GM12878 (cell line): ENCODE measurements at regions of chr1 and their contacts with region 1.

Region 1: DNA sequence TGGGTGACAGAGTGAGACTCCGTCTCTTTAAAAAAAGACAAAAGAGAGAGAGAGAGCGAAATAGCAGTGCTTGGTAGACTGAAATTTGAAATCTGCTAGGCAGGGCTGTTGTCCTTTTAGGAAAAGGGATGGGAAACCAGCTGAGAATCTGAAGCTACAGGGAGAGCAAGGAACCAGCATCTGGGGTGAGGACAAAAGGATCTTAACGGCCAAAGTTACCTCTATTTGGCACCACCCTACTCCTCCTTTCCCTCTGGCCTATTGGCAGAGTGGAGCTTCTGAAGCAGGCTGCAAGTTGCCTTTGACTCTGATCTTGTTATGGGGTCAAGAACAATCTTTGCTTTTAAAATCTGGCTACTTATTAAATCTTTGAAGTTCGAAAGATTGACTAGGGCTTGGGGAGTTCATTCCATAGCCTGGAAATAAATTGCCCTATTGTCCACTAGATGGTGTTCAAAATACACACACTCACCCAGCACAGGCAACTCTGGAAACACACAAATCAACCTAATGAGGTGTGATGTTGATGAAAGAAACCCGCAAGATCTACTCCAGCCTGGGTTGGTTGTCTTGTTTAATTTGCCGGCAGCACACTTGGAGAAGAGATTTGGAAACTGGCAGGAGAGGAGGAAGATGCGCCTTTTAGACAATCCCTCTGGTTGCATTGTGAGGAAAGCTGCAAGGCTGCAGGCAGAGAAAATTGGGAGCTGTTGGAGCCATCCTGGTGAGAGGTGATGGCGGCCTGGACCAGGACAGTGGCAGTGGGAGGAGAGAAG is 16.5 kb upstream of the PARP1 start:
- DNase-seq: no peak
- ATAC-seq: peak; percentile 89
- H3K4me3 ChIP-seq: no peak overlapping the region
- H3K27ac ChIP-seq: no peak overlapping the region
- H3K4me1 ChIP-seq: peaks cover 16% of the 10 kb centered on the region
- H3K27me3 ChIP-seq: no peaks in the 10 kb centered on the region
- CTCF ChIP-seq: peak; percentile 47 to 69 (median 67); a peak in 5 of 6 replicates
- EP300 ChIP-seq: no peak
- POLR2A ChIP-seq: no peak
- RAD21 ChIP-seq: peak; percentile 83

Region 2: GRCh38 chr1:226407497-226408284 is 16.7 kb before region 1 on chr1 and contains the start of gene PARP1:
- CTCF ChIA-PET with region 1: interaction called, 24 read pairs
- POLR2A ChIA-PET with region 1: no interaction called
- RAD21 ChIA-PET with region 1: interaction called, 6 read pairs
- SMC1A ChIA-PET with region 1: interaction called, 5 read pairs
- in situ Hi-C with region 1: no loop called
- intact Hi-C with region 1: no loop called
- DNase-seq: no peak
- ATAC-seq: peak; percentile 85
- H3K4me3 ChIP-seq: peak within 1 kb of the TSS; percentile 86
- H3K27ac ChIP-seq: peak within 1 kb of the TSS; percentile 77
- H3K4me1 ChIP-seq: peaks cover 22% of the 10 kb centered on the region
- H3K27me3 ChIP-seq: no peaks in the 10 kb centered on the region
- CTCF ChIP-seq: peak; percentile 33 to 83 (median 71); a peak in 5 of 6 replicates
- EP300 ChIP-seq: no peak; a peak in 1 of 4 replicates
- POLR2A ChIP-seq: peak; percentile 86
- RAD21 ChIP-seq: no peak
- polyA plus RNA-seq, gene PARP1: 113 to 170 TPM

Region 3: DNA sequence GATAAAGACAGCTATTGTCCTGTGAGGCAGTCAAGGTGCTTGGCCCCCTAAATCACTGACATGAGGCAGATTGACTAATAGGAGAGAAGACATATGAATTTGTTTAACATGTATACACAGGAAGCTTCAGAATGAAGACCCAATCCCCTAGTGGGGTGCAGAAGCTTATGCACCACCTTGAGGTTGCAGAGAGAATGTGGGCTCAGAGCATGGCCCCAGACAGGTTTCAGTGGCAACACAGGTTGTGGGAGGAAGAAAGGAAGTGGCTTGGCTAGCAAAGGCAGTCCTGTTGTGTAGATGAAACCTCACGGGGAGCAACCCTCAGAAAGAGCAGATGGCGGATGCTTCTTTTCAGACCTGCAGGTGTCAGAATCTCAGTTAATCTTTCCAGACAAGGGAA is 20.5 kb after region 1 on chr1:
- CTCF ChIA-PET with region 1: interaction called, 16 read pairs
- POLR2A ChIA-PET with region 1: interaction called, 9 read pairs
- RAD21 ChIA-PET with region 1: interaction called, 17 read pairs
- SMC1A ChIA-PET with region 1: interaction called, 15 read pairs
- in situ Hi-C with region 1: no loop called
- intact Hi-C with region 1: loop called (anchors 1 kb)
- DNase-seq: peak; percentile 83
- ATAC-seq: peak; percentile 99
- H3K4me3 ChIP-seq: no peak overlapping the region
- H3K27ac ChIP-seq: no peak overlapping the region
- H3K4me1 ChIP-seq: peaks cover 17% of the 10 kb centered on the region
- H3K27me3 ChIP-seq: no peaks in the 10 kb centered on the region
- CTCF ChIP-seq: peak; percentile 32 to 58 (median 32); a peak in 5 of 6 replicates
- EP300 ChIP-seq: 0 out of 4 replicates have a peak, but pooled peaks of 1 of the 2 experiments have one; percentile 55
- POLR2A ChIP-seq: no peak
- RAD21 ChIP-seq: peak; percentile 44

Region 4: DNA sequence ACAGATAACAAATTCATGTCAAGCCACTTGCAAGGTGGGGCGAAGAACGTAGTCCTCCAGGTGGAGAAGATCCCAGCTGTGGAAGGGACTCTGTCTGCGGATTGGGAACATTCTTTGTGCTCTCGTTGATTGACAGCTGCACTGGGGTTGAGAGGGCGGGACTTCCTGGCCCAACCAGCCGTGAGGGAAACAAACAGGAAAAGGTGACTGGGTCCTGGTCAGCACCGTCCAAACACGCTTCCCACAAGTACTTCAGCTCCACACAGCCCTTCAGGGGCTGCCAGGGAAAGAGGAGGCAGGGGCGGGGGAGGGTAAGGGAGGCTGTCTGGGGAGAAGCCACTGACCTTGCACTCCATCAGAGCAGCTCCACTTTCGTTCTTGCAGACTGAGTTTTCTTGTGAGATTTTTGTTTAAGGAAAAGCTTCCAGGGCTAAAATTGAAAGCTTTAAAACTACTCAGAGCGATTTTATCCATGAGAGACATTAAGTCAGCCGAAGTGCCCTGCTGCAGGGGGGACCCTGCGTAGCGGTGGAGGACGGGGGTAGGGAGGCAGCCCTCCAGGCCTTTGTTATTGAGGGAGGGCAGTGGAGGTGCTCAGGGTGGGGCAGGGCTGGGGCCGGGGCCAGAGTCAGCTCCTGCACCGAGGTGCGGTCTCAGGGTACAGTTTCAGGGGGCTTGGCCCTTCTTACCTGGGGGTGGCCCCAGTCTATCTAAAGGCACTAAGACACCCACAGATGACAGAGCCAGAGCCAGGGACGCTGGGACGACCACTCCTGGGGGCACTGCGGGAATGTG is 102.6 kb after region 1 on chr1:
- CTCF ChIA-PET with region 1: no interaction called
- POLR2A ChIA-PET with region 1: interaction called, 10 read pairs
- RAD21 ChIA-PET with region 1: interaction called, 4 read pairs
- SMC1A ChIA-PET with region 1: no interaction called
- in situ Hi-C with region 1: no loop called
- intact Hi-C with region 1: no loop called
- DNase-seq: no peak
- ATAC-seq: peak; percentile 27; the same call in 1 of the 3 replicates
- H3K4me3 ChIP-seq: no peak overlapping the region
- H3K27ac ChIP-seq: no peak overlapping the region
- H3K4me1 ChIP-seq: no peaks in the 10 kb centered on the region
- H3K27me3 ChIP-seq: peaks cover 2 to 3% of the 10 kb centered on the region in 2 experiments; a peak in 2 of 4 replicates
- CTCF ChIP-seq: no peak
- EP300 ChIP-seq: no peak
- POLR2A ChIP-seq: no peak
- RAD21 ChIP-seq: no peak

Region 5: GRCh38 chr1:226547754-226548191 is 123.4 kb after region 1 on chr1:
- CTCF ChIA-PET with region 1: interaction called, 20 read pairs
- POLR2A ChIA-PET with region 1: no interaction called
- RAD21 ChIA-PET with region 1: interaction called, 8 read pairs
- SMC1A ChIA-PET with region 1: interaction called, 9 read pairs
- in situ Hi-C with region 1: no loop called
- intact Hi-C with region 1: loop called (anchors 1 kb)
- DNase-seq: peak; percentile 17
- ATAC-seq: peak; percentile 92
- H3K4me3 ChIP-seq: no peak overlapping the region
- H3K27ac ChIP-seq: no peak overlapping the region
- H3K4me1 ChIP-seq: peaks cover 9% of the 10 kb centered on the region
- H3K27me3 ChIP-seq: peaks cover 10 to 11% of the 10 kb centered on the region in 2 experiments; a peak in 3 of 4 replicates
- CTCF ChIP-seq: peak; percentile 90 to 97 (median 93)
- EP300 ChIP-seq: no peak
- POLR2A ChIP-seq: no peak
- RAD21 ChIP-seq: peak; percentile 87

Region 6: DNA sequence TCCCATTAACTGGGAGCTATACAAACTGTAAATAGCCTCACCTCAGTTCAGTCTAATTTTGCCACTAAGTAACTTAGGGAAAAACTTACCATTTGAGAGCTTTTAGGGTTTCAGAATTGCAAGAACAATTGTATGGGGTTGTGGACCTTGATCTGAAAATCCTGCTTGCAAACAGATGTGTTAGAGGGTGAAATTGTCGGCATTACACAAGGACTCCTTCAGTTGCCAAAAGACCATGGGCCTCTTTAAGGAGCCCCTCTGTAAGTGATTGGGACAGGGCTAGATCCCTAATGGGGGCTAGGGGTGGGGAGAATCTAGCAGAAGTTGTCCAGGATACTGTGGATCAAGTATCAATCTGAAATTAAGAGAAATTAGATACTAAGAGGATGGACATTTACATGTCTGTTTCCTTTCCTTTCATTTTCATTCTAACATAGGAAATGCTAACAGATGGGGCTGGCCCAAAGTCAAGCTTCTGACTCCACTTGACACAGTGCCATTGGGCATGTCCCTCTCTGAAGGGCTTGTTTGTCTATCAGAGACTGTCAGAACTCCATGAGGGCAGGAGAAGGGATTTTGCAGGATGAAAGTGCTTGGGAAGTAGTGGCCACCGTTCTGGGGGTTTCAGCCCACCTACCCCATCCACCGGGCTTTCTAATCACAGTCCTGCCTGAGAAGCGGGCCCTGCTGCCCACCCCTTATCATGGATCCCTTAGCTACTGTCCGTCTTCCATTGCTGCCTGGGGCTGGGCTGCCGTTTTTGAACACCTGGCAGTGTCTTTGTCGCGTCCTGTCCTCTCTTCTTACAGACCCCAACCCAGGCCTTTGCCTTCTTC is 178.8 kb after region 1 on chr1:
- CTCF ChIA-PET with region 1: interaction called, 15 read pairs
- POLR2A ChIA-PET with region 1: no interaction called
- RAD21 ChIA-PET with region 1: interaction called, 6 read pairs
- SMC1A ChIA-PET with region 1: interaction called, 8 read pairs
- in situ Hi-C with region 1: no loop called
- intact Hi-C with region 1: loop called (anchors 1 kb)
- DNase-seq: no peak
- ATAC-seq: peak; percentile 44; the same call in 2 of the 3 replicates
- H3K4me3 ChIP-seq: no peak overlapping the region
- H3K27ac ChIP-seq: no peak overlapping the region
- H3K4me1 ChIP-seq: no peaks in the 10 kb centered on the region
- H3K27me3 ChIP-seq: peaks cover 0 to 4% of the 10 kb centered on the region in 2 experiments
- CTCF ChIP-seq: no peak
- EP300 ChIP-seq: no peak
- POLR2A ChIP-seq: no peak
- RAD21 ChIP-seq: no peak

Region 7: DNA sequence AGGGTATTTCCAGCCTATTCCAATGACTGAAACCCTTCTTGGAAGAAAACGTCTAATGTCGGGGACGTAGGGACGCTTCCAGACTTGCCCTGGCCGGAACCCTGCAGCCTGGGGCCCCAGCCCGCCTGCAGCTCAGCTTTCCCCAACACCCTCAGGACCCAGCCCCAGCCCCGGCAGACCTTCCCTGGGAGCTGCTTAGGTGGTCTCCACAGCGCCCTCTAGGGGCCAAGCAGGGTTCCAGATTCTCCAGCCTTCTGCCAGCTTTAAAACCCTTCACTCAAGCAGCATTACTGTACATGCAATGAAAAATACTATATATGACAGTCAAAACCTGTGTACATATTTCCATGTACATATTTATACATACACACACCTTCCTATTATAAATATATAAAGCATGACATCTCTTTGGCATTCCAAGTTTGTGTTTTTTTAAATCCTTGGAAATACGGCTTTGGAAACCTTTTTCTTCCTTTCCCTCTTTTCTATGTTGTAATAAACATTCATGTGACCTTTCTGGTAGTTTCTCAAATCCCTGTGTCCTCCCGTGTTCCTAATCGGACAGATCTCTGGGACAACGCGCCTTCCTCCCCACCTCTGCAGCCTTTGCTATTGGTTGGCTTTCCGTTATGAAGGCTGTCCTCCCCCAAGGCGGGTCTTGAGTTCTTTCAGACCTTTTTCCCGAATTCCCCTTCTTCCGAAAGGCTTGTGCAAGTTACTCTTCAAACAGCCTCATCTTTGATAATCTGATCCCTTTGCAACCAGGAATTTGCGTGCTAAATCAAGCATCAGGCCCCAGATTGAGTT is 184.5 kb after region 1 on chr1:
- CTCF ChIA-PET with region 1: interaction called, 15 read pairs
- POLR2A ChIA-PET with region 1: no interaction called
- RAD21 ChIA-PET with region 1: interaction called, 6 read pairs
- SMC1A ChIA-PET with region 1: interaction called, 8 read pairs
- in situ Hi-C with region 1: no loop called
- intact Hi-C with region 1: loop called (anchors 1 kb)
- DNase-seq: no peak
- ATAC-seq: peak; percentile 96
- H3K4me3 ChIP-seq: no peak overlapping the region
- H3K27ac ChIP-seq: no peak overlapping the region
- H3K4me1 ChIP-seq: no peaks in the 10 kb centered on the region
- H3K27me3 ChIP-seq: peaks cover 0 to 1% of the 10 kb centered on the region in 2 experiments; a peak in 3 of 4 replicates
- CTCF ChIP-seq: peak; percentile 71 to 88 (median 84)
- EP300 ChIP-seq: no peak
- POLR2A ChIP-seq: no peak
- RAD21 ChIP-seq: peak; percentile 66

Region 8: GRCh38 chr1:227401562-227402342 is 977.3 kb after region 1 on chr1:
- CTCF ChIA-PET with region 1: no interaction called
- POLR2A ChIA-PET with region 1: no interaction called
- RAD21 ChIA-PET with region 1: no interaction called
- SMC1A ChIA-PET with region 1: no interaction called
- in situ Hi-C with region 1: no loop called
- intact Hi-C with region 1: no loop called
- DNase-seq: no peak
- ATAC-seq: no peak
- H3K4me3 ChIP-seq: no peak overlapping the region
- H3K27ac ChIP-seq: no peak overlapping the region
- H3K4me1 ChIP-seq: no peaks in the 10 kb centered on the region
- H3K27me3 ChIP-seq: no peaks in the 10 kb centered on the region
- CTCF ChIP-seq: no peak
- EP300 ChIP-seq: no peak
- POLR2A ChIP-seq: no peak
- RAD21 ChIP-seq: no peak